OCI-LY7 (cell line): ENCODE measurements at regions of chr5 and their contacts with region 1.

Region 1: GRCh38 chr5:138128334-138128733 is 10.9 kb downstream of the NME5 start:
- DNase-seq: no peak
- H3K4me3 ChIP-seq: no peak overlapping the region
- H3K27ac ChIP-seq: no peak overlapping the region
- H3K4me1 ChIP-seq: no peaks in the 10 kb centered on the region
- CTCF ChIP-seq: no peak

Region 2: DNA sequence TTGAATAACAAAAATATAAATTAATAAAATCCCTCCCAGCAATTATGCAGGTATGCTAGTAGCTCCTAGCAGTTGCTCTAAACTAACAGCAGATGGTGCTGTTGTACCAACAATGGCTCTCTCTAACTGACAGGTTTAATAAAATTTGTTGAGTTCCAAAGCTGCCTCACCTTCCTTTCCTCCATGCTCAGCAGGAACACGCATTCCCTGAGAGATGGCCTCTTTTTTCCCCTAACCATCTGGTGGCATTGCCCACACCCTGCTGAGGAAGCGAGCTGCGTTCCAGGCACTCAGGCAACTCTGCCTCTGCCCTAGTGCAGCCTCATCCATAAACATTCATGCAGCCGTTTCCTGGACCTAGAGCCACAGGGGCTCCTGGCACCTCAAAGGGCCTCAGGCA is 498.7 kb before region 1 on chr5:
- CTCF ChIA-PET with region 1: no interaction called
- POLR2A ChIA-PET with region 1: no interaction called
- intact Hi-C with region 1: loop called (anchors 5 kb)
- DNase-seq: peak; percentile 68
- H3K4me3 ChIP-seq: no peak overlapping the region
- H3K27ac ChIP-seq: no peak overlapping the region
- H3K4me1 ChIP-seq: no peaks in the 10 kb centered on the region
- CTCF ChIP-seq: peak; percentile 91

Region 3: GRCh38 chr5:137778772-137779564 is 349.4 kb before region 1 on chr5:
- CTCF ChIA-PET with region 1: no interaction called
- POLR2A ChIA-PET with region 1: no interaction called
- intact Hi-C with region 1: loop called (anchors 5 kb)
- DNase-seq: peak; percentile 51
- H3K4me3 ChIP-seq: no peak overlapping the region
- H3K27ac ChIP-seq: no peak overlapping the region
- H3K4me1 ChIP-seq: no peaks in the 10 kb centered on the region
- CTCF ChIP-seq: peak; percentile 88

Region 4: GRCh38 chr5:138011991-138012390 is 116.3 kb before region 1 on chr5:
- CTCF ChIA-PET with region 1: no interaction called
- POLR2A ChIA-PET with region 1: no interaction called
- intact Hi-C with region 1: no loop called
- DNase-seq: no peak
- H3K4me3 ChIP-seq: no peak overlapping the region
- H3K27ac ChIP-seq: no peak overlapping the region
- H3K4me1 ChIP-seq: no peaks in the 10 kb centered on the region
- CTCF ChIP-seq: no peak

Region 5: DNA sequence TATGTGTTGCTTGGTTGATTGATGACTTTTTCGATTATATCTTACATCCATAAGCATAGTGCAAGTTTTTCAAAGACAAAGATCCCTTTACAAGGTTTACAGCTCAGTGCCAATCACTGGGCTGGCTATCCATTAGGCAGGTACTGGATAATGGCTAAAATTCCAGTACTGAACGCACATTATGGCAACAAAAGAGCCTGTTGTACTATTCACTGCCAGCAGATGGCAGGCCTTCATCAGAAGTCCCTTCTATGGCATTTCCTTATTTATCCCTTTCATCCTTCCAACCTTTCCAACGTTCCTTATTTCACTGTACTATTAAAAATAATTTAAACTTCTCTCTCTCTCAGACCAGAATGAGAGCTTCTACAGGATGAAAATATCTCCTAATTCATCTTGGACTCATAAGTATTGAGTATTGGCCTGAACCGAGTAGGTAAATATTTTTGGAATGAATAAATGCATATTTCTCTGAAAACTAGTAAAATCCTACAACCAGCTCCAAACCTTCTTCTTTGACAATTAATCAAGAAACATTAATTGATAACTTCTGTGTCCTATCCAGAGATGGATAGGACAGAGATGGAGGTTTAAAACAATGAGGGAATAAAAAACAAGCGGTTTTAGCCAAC is 51.2 kb before region 1 on chr5:
- CTCF ChIA-PET with region 1: interaction called, 3 read pairs
- POLR2A ChIA-PET with region 1: interaction called, 3 read pairs
- intact Hi-C with region 1: loop called (anchors 1 kb)
- DNase-seq: peak; percentile 65
- H3K4me3 ChIP-seq: no peak overlapping the region
- H3K27ac ChIP-seq: no peak overlapping the region
- H3K4me1 ChIP-seq: peaks cover 13% of the 10 kb centered on the region
- CTCF ChIP-seq: peak; percentile 97

Region 6: GRCh38 chr5:138230981-138231589 is 102.8 kb after region 1 on chr5:
- CTCF ChIA-PET with region 1: no interaction called
- POLR2A ChIA-PET with region 1: no interaction called
- intact Hi-C with region 1: no loop called
- DNase-seq: no peak
- H3K4me3 ChIP-seq: no peak overlapping the region
- H3K27ac ChIP-seq: no peak overlapping the region
- H3K4me1 ChIP-seq: no peaks in the 10 kb centered on the region
- CTCF ChIP-seq: no peak